HEK293 (cell line): ENCODE measurements at regions of chr14 and their contacts with region 1.

Region 1: DNA sequence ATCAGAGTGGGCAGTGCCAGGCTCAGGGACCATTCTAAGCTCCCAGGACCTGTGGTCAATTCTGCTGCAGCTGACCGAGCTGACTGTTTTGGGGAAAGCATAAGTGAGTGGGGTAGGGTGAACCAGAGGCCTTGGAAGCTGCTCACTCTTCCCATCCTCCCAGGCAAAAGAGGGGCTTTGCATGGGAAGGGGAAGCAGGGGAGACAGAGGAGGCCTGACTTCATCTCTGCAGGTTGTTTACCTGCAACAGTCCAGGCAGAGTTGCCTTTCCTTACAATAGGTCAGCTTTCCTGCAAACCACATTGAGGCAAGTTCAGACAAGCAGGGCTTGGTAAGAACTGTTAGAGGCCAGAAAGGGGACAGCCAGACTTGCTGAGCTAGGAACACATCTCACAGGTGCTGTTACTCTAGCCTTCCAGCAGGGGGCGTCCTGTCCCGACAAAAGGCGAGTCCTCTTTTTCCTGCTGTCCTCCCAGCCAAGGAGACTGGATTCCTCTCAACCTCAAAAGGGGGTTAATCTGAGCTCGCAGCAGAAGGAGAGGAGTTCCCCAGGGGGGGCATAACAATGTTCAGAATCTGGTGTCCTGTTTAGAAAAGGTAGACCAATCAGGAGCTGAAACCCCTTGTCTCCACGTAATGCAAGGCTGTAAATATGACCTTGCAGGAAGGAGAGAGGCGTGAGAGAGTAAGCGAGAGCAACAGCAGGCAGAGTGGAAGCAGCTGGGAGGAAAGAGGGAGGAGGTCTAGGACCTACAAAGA is 4.3 kb upstream of the DHRS2 start:
- H3K4me3 ChIP-seq: no peak overlapping the region
- H3K27ac ChIP-seq: no peak overlapping the region
- H3K4me1 ChIP-seq: no peaks in the 10 kb centered on the region
- CTCF ChIP-seq: peak; percentile 77

Region 2: DNA sequence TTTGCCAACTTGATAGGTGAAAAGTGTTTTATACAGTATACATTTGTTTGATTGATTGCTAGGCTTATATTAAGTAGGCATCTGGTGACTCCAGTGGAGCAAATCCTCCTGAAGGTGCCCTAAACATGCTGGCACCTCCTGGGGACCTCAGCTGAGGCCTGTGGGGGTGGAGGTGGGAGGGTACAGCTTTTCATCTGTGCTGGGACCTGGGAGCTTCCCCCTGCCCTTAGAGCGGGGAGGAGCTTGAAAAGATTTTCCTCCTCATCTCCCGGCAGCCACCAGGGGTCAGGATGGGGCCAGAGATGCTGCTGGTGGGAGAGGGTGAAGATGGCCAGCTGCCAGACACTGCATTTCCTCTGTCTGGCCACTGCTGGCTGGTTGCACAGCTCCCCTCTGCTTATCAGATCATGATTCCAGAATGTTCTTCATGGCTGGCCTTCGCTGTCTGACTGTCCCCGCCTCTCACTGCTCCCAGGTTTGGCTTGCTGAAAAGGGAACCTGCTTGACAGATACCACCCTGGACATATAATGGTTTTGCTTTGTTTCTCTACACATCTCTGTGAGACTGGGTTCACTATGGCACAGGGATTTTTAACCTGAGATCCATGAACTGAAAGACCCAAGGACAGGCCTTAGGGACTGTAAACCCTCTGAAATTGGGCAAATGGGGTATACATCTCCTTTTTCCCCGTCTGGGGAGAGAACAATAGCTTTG is 42.8 kb before region 1 on chr14:
- CTCF ChIA-PET with region 1: interaction called, 38 read pairs
- POLR2A ChIA-PET with region 1: interaction called, 4 read pairs
- H3K4me3 ChIP-seq: no peak overlapping the region
- H3K27ac ChIP-seq: no peak overlapping the region
- H3K4me1 ChIP-seq: no peaks in the 10 kb centered on the region
- CTCF ChIP-seq: peak; percentile 95

Region 3: GRCh38 chr14:23615856-23616255 is 16.0 kb before region 1 on chr14:
- CTCF ChIA-PET with region 1: interaction called, 23 read pairs
- POLR2A ChIA-PET with region 1: no interaction called
- H3K4me3 ChIP-seq: no peak overlapping the region
- H3K27ac ChIP-seq: no peak overlapping the region
- H3K4me1 ChIP-seq: no peaks in the 10 kb centered on the region
- CTCF ChIP-seq: no peak

Region 4: DNA sequence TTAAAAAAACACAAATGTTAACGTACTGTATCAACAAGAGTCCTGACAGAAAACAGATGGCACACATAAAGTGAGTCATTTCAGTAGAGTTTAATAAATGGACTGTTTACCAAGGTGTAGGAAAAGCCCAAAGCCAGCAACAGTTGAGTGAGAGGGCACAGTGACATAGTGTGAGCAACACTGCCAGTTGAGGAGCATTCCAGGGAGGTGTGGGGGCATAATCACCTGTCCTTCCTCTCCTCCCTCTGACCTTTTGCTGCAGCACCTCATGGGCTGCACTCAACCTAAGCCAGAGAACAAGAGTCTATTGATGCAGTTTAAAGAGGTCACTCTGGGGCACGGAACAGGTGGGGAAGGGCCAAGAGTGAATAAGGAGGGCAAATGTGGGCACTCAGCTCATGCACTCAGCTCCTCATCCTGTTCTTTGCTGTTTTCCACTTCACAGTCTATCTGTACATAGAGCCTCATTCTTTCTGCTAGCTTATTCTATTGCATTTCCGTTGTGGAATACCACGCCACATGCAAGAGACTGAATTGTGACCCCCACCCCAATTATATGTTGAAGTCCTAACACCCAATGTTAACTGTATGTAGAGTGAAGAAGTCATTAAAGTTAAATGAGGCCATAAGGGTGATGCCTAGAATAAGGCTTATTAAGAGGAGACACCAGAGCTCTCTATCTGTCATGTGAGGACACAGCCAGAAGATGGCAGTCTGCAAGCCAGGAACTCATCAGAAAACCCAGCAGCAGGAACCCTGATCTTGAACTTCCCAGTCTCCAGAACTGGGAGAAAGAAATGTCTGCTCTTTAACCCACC is 33.7 kb after region 1 on chr14:
- CTCF ChIA-PET with region 1: interaction called, 20 read pairs
- POLR2A ChIA-PET with region 1: no interaction called
- H3K4me3 ChIP-seq: no peak overlapping the region
- H3K27ac ChIP-seq: no peak overlapping the region
- H3K4me1 ChIP-seq: no peaks in the 10 kb centered on the region
- CTCF ChIP-seq: no peak

Region 5: GRCh38 chr14:23910101-23910875 is 278.4 kb after region 1 on chr14:
- CTCF ChIA-PET with region 1: interaction called, 93 read pairs
- POLR2A ChIA-PET with region 1: no interaction called
- H3K4me3 ChIP-seq: no peak overlapping the region
- H3K27ac ChIP-seq: no peak overlapping the region
- H3K4me1 ChIP-seq: no peaks in the 10 kb centered on the region
- CTCF ChIP-seq: 0 out of 2 replicates have a peak, but pooled peaks have one; percentile 12

Region 6: DNA sequence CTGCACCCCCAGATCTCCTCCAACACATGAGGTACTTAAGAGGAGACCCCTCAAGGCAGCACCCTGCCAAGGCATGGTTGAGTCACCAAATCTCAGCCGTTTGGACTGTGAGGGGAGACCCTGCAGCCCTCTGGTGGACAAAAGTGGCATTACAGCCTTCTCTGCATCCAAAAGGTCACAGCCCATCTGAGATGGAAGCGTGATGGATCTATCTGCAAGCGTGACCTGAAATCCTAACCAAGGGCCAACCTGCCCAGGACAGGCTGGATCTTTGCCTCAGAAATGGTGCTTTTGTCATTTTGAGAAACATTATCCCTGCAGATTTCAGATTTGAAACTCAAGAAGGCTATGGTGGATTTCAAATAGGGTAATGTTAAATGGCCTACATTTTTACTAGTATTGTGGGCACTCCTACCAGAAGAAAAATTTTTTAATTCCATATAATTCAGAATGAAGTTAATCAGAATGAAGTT is 298.0 kb after region 1 on chr14:
- CTCF ChIA-PET with region 1: interaction called, 33 read pairs
- POLR2A ChIA-PET with region 1: no interaction called
- H3K4me3 ChIP-seq: no peak overlapping the region
- H3K27ac ChIP-seq: no peak overlapping the region
- H3K4me1 ChIP-seq: no peaks in the 10 kb centered on the region
- CTCF ChIP-seq: peak; percentile 36; the same call in 1 of the 2 replicates